ENCODE measurements at regions of chr15 and their contacts with region 1.

Region 1: GRCh38 chr15:65101411-65101890 is 13.5 kb downstream of the UBAP1L start:
- DNase-seq: peak; percentile 86
- H3K4me3 ChIP-seq: no peak overlapping the region
- H3K27ac ChIP-seq: no peak overlapping the region
- H3K4me1 ChIP-seq: no peaks in the 10 kb centered on the region
- H3K27me3 ChIP-seq: no peaks in the 10 kb centered on the region
- CTCF ChIP-seq: peak; percentile 71

Region 2: GRCh38 chr15:65008983-65009382 is 92.5 kb before region 1 on chr15:
- intact Hi-C with region 1: no loop called
- DNase-seq: no peak
- H3K4me3 ChIP-seq: no peak overlapping the region
- H3K27ac ChIP-seq: no peak overlapping the region
- H3K4me1 ChIP-seq: no peaks in the 10 kb centered on the region
- H3K27me3 ChIP-seq: no peaks in the 10 kb centered on the region
- CTCF ChIP-seq: no peak

Region 3: DNA sequence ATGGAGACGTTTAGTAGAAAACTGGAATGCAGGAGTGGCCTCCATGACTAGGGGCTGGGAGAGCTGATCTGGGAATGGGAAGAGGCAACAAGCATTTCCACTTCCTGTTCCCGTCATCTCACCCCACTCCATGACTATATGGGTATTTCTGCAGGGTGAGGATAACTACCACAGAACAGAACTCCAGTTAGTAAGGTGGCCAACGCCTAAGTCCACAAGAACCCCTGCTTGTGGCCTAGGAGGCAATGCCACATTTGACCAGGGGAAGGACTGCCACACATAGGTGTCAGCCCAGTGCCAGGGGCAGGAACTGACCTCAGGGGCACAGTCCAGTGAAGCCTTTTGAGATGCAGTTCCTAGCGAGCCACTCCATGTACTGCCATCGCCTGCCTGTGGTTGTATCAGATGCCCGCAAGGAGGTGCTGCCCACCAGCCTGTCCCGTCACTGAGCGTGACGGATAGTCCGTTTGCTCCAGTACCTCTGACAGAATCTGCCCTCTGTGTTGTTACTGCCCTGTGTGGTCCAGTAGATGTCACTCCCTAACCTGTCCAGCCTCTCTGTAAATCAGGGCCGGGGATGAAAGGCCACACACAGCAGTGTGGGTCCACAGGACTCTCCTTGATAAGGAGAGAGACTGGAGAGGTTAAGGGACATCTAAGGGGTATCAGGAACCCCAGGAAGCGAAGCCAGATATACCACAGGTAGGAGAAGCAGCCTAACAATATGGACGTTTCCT is 68.5 kb before region 1 on chr15:
- intact Hi-C with region 1: loop called (anchors 5 kb)
- DNase-seq: peak; percentile 80
- H3K4me3 ChIP-seq: no peak overlapping the region
- H3K27ac ChIP-seq: peak overlapping the region; percentile 16
- H3K4me1 ChIP-seq: peaks cover 6% of the 10 kb centered on the region
- H3K27me3 ChIP-seq: no peaks in the 10 kb centered on the region
- CTCF ChIP-seq: peak; percentile 74

Region 4: GRCh38 chr15:65054333-65055200 is 46.9 kb before region 1 on chr15:
- intact Hi-C with region 1: loop called (anchors 2 kb)
- DNase-seq: peak; percentile 78
- H3K4me3 ChIP-seq: no peak overlapping the region
- H3K27ac ChIP-seq: peak overlapping the region; percentile 36
- H3K4me1 ChIP-seq: peaks cover 15% of the 10 kb centered on the region
- H3K27me3 ChIP-seq: no peaks in the 10 kb centered on the region
- CTCF ChIP-seq: peak; percentile 94